Activated naive CD4-positive, alpha-beta T cell treated with anti-CD3 and anti-CD28 coated beads, Interleukin-2, amount 10 ng/mL, durations not matched to agents 7 days and 5 days (primary cell): ENCODE measurements at regions of chr17 and their contacts with region 1.

Region 1: DNA sequence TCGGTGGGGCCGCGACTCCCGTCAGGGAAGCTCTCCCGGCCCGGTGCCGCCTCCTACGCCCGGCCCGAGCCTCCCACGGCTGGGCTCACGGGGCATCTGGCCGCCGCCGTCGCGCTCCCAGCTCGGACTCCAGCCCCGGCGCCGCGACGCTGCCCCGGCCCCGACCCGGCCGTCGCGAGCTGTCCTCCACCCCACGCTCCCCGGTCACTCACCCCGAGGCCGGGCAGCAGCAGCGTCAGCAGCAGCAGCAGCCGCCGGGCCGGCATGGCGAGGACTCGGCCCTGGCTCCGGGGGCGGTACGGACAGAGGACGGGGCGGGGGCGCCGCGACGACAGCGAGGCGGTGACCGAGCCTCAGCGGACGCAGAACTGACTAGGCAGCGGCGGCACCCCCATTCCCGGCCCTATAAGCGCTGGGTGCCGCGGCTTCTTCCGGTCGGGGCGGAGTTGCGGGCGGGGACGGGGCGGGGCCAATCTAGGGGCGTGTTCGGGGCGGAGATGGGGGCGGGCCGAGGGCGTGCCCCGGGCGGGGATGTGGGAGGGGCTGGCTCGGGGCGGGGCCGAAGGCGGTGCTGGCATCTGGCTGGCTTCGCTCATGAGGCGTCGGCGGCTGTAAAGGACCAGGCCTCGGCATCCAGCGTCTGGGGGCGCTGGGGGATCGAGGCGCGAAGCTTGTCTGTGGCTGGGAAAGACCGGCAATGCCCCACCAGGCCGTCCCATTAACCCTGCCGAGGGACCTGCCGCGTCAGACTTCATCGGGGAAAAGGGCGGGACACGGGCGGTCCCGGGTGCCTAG is at the start of gene ERN1:
- DNase-seq: peak; percentile 93
- H3K4me3 Mint-ChIP-seq: peak within 1 kb of the TSS; percentile 97
- H3K27ac Mint-ChIP-seq: peak within 1 kb of the TSS; percentile 89
- H3K4me1 Mint-ChIP-seq: peaks cover 56% of the 10 kb centered on the region
- H3K27me3 Mint-ChIP-seq: peaks cover 1% of the 10 kb centered on the region

Region 2: GRCh38 chr17:63904316-63904715 is 225.6 kb before region 1 on chr17:
- CTCF ChIA-PET with region 1: interaction called, 12 read pairs
- DNase-seq: no peak
- H3K4me3 Mint-ChIP-seq: no peak overlapping the region
- H3K27ac Mint-ChIP-seq: no peak overlapping the region
- H3K4me1 Mint-ChIP-seq: peaks cover 2% of the 10 kb centered on the region
- H3K27me3 Mint-ChIP-seq: peaks cover 58% of the 10 kb centered on the region

Region 3: DNA sequence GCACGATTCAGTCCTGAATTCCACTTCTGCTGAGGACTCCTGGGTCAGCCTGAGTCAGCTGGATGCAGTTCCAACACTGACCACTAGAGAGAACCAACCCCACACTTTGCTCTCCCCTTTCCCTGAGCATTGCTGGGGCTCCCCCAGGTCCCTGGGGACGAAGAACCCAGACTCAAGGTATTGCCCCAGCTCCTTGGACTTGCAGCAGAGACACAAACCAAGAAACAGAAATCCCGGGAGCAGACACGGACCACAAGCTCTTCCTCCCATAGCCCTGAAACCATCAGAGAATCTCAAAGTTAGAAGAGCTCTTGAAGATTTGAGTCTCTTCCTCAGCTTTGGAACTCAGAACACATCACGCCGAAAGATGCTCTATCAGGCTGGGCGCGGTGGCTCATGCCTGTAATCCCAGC is 210.6 kb before region 1 on chr17:
- CTCF ChIA-PET with region 1: interaction called, 21 read pairs
- DNase-seq: peak; percentile 83
- H3K4me3 Mint-ChIP-seq: no peak overlapping the region
- H3K27ac Mint-ChIP-seq: no peak overlapping the region
- H3K4me1 Mint-ChIP-seq: peaks cover 9% of the 10 kb centered on the region
- H3K27me3 Mint-ChIP-seq: peaks cover 61% of the 10 kb centered on the region

Region 4: GRCh38 chr17:63984651-63985386 is 145.1 kb before region 1 on chr17:
- CTCF ChIA-PET with region 1: interaction called, 10 read pairs
- DNase-seq: peak; percentile 76
- H3K4me3 Mint-ChIP-seq: peak overlapping the region; percentile 9
- H3K27ac Mint-ChIP-seq: peak overlapping the region; percentile 78
- H3K4me1 Mint-ChIP-seq: peaks cover 29% of the 10 kb centered on the region
- H3K27me3 Mint-ChIP-seq: peaks cover 12% of the 10 kb centered on the region

Region 5: DNA sequence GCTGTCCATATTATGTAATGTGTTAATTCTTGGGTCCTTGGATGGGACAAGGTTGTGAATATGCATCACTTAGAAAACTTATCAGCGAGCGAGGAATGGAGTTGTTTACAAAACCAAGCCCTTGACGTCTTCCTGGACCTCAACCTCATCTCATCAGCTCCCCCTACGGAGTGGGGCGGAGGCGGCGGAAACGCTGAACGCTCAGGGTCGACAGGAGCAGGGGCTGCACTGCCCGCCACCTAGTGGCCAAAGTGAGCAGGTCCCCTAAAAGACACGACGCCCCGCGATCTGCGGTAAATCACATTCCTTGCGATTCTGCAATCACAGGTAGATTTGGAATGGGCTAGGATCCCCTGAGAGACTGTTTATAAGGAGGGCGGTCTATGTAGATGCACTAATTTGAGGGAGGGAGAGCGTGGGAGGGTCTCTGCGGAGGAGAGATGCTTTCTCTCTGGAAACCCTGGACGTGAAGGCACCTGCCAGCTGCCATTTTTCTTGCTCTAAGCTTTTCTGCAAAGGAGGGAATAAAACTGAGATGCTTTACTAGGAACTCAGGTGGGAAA is 104.1 kb before region 1 on chr17:
- CTCF ChIA-PET with region 1: interaction called, 417 read pairs
- DNase-seq: peak; percentile 96
- H3K4me3 Mint-ChIP-seq: peak overlapping the region; percentile 56
- H3K27ac Mint-ChIP-seq: peak overlapping the region; percentile 92
- H3K4me1 Mint-ChIP-seq: peaks cover 75% of the 10 kb centered on the region
- H3K27me3 Mint-ChIP-seq: no peaks in the 10 kb centered on the region

Region 6: GRCh38 chr17:64056269-64057005 is 73.5 kb before region 1 on chr17:
- CTCF ChIA-PET with region 1: interaction called, 214 read pairs
- DNase-seq: no peak
- H3K4me3 Mint-ChIP-seq: peak overlapping the region; percentile 42
- H3K27ac Mint-ChIP-seq: peak overlapping the region; percentile 82
- H3K4me1 Mint-ChIP-seq: peaks cover 64% of the 10 kb centered on the region
- H3K27me3 Mint-ChIP-seq: no peaks in the 10 kb centered on the region

Region 7: DNA sequence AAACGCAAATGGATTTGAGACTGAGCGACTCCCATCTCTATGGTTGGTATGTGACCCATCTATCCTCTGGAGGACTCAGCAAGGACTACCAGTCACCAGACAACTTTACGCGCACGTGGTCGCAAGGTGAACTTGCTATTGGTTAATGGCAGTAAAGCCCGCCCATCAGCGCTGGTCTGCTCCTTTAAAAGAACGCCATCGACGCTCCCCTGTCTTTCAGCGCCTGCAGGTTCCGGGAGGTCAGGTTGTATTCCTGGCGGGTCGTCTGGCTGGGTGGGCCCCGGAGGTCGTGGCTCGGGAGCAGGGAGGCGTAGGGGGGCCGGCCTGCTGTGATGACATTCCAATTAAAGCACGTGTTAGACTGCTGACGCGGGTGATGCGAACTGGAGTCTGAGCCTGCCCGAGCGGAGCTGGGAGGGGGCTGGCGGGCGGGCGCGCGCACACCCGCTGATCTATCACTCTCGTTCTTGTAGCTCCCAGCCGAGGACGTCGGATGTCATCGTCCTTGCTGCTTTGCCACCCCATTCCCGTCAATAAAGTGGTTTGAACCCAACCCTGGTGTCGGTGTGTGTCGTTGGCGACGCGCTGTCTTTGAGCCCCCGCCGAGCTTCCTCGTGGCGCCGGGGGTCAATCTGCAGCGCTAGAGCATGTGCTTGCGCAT is 15.9 kb after region 1 on chr17:
- CTCF ChIA-PET with region 1: interaction called, 16 read pairs
- DNase-seq: peak; percentile 97
- H3K4me3 Mint-ChIP-seq: no peak overlapping the region
- H3K27ac Mint-ChIP-seq: no peak overlapping the region
- H3K4me1 Mint-ChIP-seq: peaks cover 27% of the 10 kb centered on the region
- H3K27me3 Mint-ChIP-seq: no peaks in the 10 kb centered on the region